IMR-90 (cell line): ENCODE measurements at regions of chr5 and their contacts with region 1.

Region 1: GRCh38 chr5:141590127-141590526 is 28.7 kb downstream of the DIAPH1 start:
- DNase-seq: no peak
- ATAC-seq: no peak
- H3K4me3 ChIP-seq: no peak overlapping the region
- H3K27ac ChIP-seq: no peak overlapping the region
- H3K4me1 ChIP-seq: no peaks in the 10 kb centered on the region
- H3K27me3 ChIP-seq: no peaks in the 10 kb centered on the region
- CTCF ChIP-seq: no peak
- POLR2A ChIP-seq: no peak
- RAD21 ChIP-seq: no peak

Region 2: GRCh38 chr5:141628175-141628788 is 38.2 kb after region 1 on chr5:
- CTCF ChIA-PET with region 1: interaction called, 5 read pairs
- POLR2A ChIA-PET with region 1: interaction called, 5 read pairs
- dilution Hi-C with region 1: no loop called
- in situ Hi-C with region 1: loop called (anchors 5 kb)
- intact Hi-C with region 1: no loop called
- DNase-seq: peak; percentile 69
- ATAC-seq: peak; percentile 65
- H3K4me3 ChIP-seq: no peak overlapping the region
- H3K27ac ChIP-seq: no peak overlapping the region
- H3K4me1 ChIP-seq: peaks cover 4% of the 10 kb centered on the region
- H3K27me3 ChIP-seq: no peaks in the 10 kb centered on the region
- CTCF ChIP-seq: no peak
- POLR2A ChIP-seq: no peak
- RAD21 ChIP-seq: no peak